ENCODE measurements at regions of chr11 and their contacts with region 1.

Region 1: GRCh38 chr11:119728651-119729580 is at the start of gene NECTIN1:
- DNase-seq: peak; percentile 85 to 90
- ATAC-seq: peak; percentile 87 to 92 (median 87)
- H3K4me3 ChIP-seq: peak within 1 kb of the TSS; percentile 39
- H3K4me3 Mint-ChIP-seq: peak within 1 kb of the TSS; percentile 94
- H3K27ac ChIP-seq: no peak within 1 kb of the TSS
- H3K27ac Mint-ChIP-seq: peak within 1 kb of the TSS in 1 of 2 donors; percentile 81
- H3K4me1 ChIP-seq: peaks cover 32% of the 10 kb centered on the region
- H3K4me1 Mint-ChIP-seq: peaks cover 5 to 32% of the 10 kb centered on the region in 2 donors
- H3K27me3 ChIP-seq: peaks cover 24% of the 10 kb centered on the region
- H3K27me3 Mint-ChIP-seq: peaks cover 35 to 43% of the 10 kb centered on the region in 2 donors
- CTCF ChIP-seq: peak; percentile 100
- total RNA-seq, gene NECTIN1: 5.8 to 18.8 (median 7.8) TPM

Region 2: DNA sequence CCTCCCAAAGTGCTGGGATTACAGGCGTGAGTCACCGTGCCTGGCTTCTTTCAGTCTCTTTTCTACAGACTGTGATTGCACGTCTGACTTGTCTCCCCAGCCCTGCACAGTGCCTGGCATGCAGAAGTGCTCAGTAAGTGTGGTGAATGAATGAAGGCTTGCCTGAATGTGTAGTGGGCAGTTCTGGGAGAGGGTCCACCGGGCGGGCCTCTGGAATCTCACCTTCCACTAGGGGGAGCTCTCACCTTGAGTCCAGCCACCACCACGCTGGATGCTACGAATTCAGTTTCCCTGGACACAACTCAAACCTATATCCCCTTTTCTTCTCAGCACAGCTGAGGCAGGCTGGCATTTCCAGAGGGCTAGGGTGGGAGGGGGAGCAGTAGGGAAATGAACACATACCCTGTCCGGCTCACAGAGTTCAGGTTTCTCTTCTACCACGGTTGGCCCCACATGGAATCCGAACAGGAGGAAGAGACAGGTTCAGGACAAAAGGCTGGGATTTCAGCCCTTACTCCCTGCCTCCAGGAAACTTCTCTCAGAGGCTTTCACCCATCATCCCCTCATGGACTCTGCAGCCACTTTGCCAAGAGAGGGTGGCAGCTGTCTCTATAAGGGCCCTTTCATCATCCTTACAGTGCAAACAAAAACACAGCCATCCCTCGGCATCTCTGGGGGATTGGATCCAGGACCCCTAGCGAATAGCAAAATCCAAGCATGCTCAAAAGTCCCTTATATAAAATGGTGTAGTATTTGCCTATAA is 86.8 kb before region 1 on chr11:
- intact Hi-C with region 1: loop called (anchors 1 kb)
- DNase-seq: peak in 1 of 2 donors; percentile 63
- ATAC-seq: peak in 1 of 3 donors; percentile 45
- H3K4me3 ChIP-seq: no peak overlapping the region
- H3K4me3 Mint-ChIP-seq: no peak overlapping the region
- H3K27ac ChIP-seq: no peak overlapping the region
- H3K27ac Mint-ChIP-seq: no peak overlapping the region
- H3K4me1 ChIP-seq: no peaks in the 10 kb centered on the region
- H3K4me1 Mint-ChIP-seq: no peaks in the 10 kb centered on the region
- H3K27me3 ChIP-seq: no peaks in the 10 kb centered on the region
- H3K27me3 Mint-ChIP-seq: peaks cover 6 to 12% of the 10 kb centered on the region in 2 donors
- CTCF ChIP-seq: peak; percentile 56

Region 3: GRCh38 chr11:119666463-119667131 is 62.3 kb before region 1 on chr11:
- intact Hi-C with region 1: loop called (anchors 1 kb)
- DNase-seq: peak; percentile 66 to 76
- ATAC-seq: peak; percentile 86 to 98 (median 98)
- H3K4me3 ChIP-seq: no peak overlapping the region
- H3K4me3 Mint-ChIP-seq: no peak overlapping the region
- H3K27ac ChIP-seq: no peak overlapping the region
- H3K27ac Mint-ChIP-seq: no peak overlapping the region
- H3K4me1 ChIP-seq: no peaks in the 10 kb centered on the region
- H3K4me1 Mint-ChIP-seq: no peaks in the 10 kb centered on the region
- H3K27me3 ChIP-seq: no peaks in the 10 kb centered on the region
- H3K27me3 Mint-ChIP-seq: peaks cover 6 to 26% of the 10 kb centered on the region in 2 donors
- CTCF ChIP-seq: peak; percentile 90

Region 4: GRCh38 chr11:119673759-119674336 is 55.1 kb before region 1 on chr11:
- intact Hi-C with region 1: loop called (anchors 2 kb)
- DNase-seq: peak; percentile 35 to 49
- ATAC-seq: peak; percentile 75 to 91 (median 90)
- H3K4me3 ChIP-seq: no peak overlapping the region
- H3K4me3 Mint-ChIP-seq: no peak overlapping the region
- H3K27ac ChIP-seq: no peak overlapping the region
- H3K27ac Mint-ChIP-seq: peak overlapping the region in 1 of 2 donors; percentile 80
- H3K4me1 ChIP-seq: peaks cover 26% of the 10 kb centered on the region
- H3K4me1 Mint-ChIP-seq: peaks cover 14 to 16% of the 10 kb centered on the region in 2 donors
- H3K27me3 ChIP-seq: peaks cover 3% of the 10 kb centered on the region
- H3K27me3 Mint-ChIP-seq: peaks cover 25 to 38% of the 10 kb centered on the region in 2 donors
- CTCF ChIP-seq: no peak

Region 5: GRCh38 chr11:119691020-119691666 is 37.8 kb before region 1 on chr11:
- intact Hi-C with region 1: loop called (anchors 2 kb)
- DNase-seq: peak; percentile 59 to 64
- ATAC-seq: peak; percentile 69 to 92 (median 80)
- H3K4me3 ChIP-seq: no peak overlapping the region
- H3K4me3 Mint-ChIP-seq: peak overlapping the region; percentile 77
- H3K27ac ChIP-seq: no peak overlapping the region
- H3K27ac Mint-ChIP-seq: peak overlapping the region; percentile 57 to 73
- H3K4me1 ChIP-seq: peaks cover 72% of the 10 kb centered on the region
- H3K4me1 Mint-ChIP-seq: peaks cover 49 to 75% of the 10 kb centered on the region in 2 donors
- H3K27me3 ChIP-seq: peaks cover 41% of the 10 kb centered on the region
- H3K27me3 Mint-ChIP-seq: peaks cover 48 to 52% of the 10 kb centered on the region in 2 donors
- CTCF ChIP-seq: no peak